ENCODE measurements at regions of chr3 and their contacts with region 1.

Region 1: GRCh38 chr3:194486540-194487288 is at the start of gene ATP13A3:
- DNase-seq: peak; percentile 91 to 94 (median 93)
- ATAC-seq: peak; percentile 94
- H3K4me3 ChIP-seq: peak within 1 kb of the TSS; percentile 56
- H3K4me1 ChIP-seq: peaks cover 21% of the 10 kb centered on the region
- CTCF ChIP-seq: no peak
- total RNA-seq, gene ATP13A3: 76.2 to 96.1 (median 83.9) TPM

Region 2: GRCh38 chr3:194250098-194251002 is 236.4 kb before region 1 on chr3:
- intact Hi-C with region 1: no loop called
- DNase-seq: peak; percentile 61 to 72 (median 71)
- ATAC-seq: peak; percentile 73
- H3K4me3 ChIP-seq: no peak overlapping the region
- H3K4me1 ChIP-seq: peaks cover 13% of the 10 kb centered on the region
- CTCF ChIP-seq: no peak

Region 3: GRCh38 chr3:194306109-194306686 is 180.5 kb before region 1 on chr3:
- intact Hi-C with region 1: no loop called
- DNase-seq: no peak
- ATAC-seq: peak; percentile 67
- H3K4me3 ChIP-seq: no peak overlapping the region
- H3K4me1 ChIP-seq: no peaks in the 10 kb centered on the region
- CTCF ChIP-seq: no peak

Region 4: DNA sequence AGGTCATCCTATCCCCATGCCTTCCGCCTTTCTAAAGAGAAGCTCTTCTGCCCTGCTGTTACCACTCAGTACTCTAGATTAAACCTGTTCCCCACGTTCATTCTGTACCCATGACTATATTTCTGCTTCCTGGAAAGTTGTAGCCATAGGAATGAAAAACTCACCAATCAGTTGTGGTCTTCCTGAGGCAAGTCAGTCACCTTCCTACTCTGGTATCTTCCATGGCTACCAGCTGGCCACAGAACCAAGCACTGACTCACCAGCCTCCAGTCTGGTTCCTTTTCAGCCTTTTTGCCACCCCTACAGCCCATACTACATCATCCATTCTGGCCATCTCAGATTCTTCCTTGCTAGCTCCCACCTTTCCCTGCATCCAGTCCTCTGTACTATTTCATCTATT is 100.1 kb after region 1 on chr3:
- intact Hi-C with region 1: loop called in 1 of 2 experiments (anchors 5 kb)
- DNase-seq: no peak
- ATAC-seq: no peak
- H3K4me3 ChIP-seq: no peak overlapping the region
- H3K4me1 ChIP-seq: peaks cover 3% of the 10 kb centered on the region
- CTCF ChIP-seq: no peak

Measured in mucosa of descending colon (tissue), 3 donors.